ENCODE measurements at regions of chr1 and their contacts with region 1.

Region 1: GRCh38 chr1:27858072-27858958 is 14.0 kb upstream of the THEMIS2 start:
- DNase-seq: peak; percentile 81 to 96
- H3K4me3 ChIP-seq: no peak overlapping the region
- CTCF ChIP-seq: peak in 1 of 3 donors; percentile 77
- POLR2A ChIP-seq: no peak

Region 2: DNA sequence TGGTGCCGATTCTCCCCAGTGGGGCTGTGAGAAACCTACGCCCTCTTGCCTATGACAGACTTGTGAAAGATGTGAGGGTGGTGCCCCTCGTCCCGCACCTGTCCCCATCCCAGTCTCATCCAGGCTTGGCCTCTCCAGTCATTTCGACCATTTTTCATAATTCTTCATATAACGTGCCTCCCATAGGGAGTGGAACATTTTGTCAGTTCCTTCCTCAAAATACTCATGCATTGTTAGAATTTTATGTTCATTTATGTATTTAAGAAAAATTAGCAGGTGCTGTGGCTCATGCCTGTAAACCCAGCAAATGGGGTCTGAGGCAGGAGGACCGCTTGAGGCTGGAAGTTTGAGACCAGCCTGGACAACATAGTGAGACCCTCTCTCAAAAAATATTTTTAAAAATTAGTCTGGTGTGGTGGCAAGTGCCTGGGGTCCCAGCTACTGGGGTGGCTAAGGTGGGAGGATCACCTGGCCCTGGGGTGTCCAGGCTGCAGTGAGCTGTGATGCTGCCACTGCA is 56.8 kb after region 1 on chr1:
- intact Hi-C with region 1: no loop called
- DNase-seq: peak in 1 of 2 donors; percentile 46
- H3K4me3 ChIP-seq: no peak overlapping the region
- CTCF ChIP-seq: no peak
- POLR2A ChIP-seq: no peak

Region 3: GRCh38 chr1:27979151-27979858 is 121.0 kb after region 1 on chr1:
- intact Hi-C with region 1: loop called (anchors 10 kb)
- DNase-seq: no peak
- H3K4me3 ChIP-seq: no peak overlapping the region
- CTCF ChIP-seq: no peak
- POLR2A ChIP-seq: no peak

Region 4: GRCh38 chr1:28235755-28236655 is 377.7 kb after region 1 on chr1 and contains the start of gene ATP5IF1:
- intact Hi-C with region 1: no loop called
- DNase-seq: peak; percentile 98 to 99
- H3K4me3 ChIP-seq: peak within 1 kb of the TSS; percentile 86
- CTCF ChIP-seq: no peak
- POLR2A ChIP-seq: peak in 1 of 2 donors; percentile 12
- total RNA-seq, gene ATP5IF1: 125 to 326 (median 247) TPM